ENCODE measurements at regions of chr1 and their contacts with region 1.

Region 1: DNA sequence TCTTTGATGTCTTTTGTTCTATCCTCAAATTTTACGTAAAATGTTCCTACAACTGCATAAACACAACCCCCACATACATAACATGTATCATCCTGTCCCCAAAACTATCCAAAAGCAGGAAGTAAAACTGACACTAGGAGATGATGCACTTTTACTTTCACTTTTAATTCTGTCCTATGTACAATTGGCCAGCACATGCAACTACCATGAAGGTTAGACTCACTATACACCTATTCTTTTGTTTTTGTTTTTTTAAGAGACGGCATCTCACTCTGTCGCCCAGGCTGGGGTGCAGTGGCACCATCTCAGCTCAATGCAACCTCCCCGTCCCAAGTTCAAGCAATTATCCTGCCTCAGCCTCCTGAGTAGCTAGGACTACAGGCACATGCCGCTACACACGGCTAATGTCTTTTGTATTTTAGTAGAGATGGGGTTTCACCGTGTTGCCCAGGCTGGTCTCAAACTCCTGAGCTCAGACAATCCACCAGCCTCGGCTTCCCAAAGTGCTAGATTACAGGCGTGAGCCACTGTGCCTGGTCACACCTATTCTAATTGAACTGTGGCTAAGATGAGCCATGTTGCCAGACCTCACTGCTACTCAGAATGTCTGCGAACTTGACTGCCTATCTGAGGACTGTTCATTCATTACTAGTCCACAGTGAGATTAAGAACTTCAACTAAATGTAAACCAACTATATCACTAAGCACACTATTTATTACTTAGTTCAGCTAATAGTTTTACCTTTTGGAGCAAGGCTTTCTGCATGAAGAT is 48.0 kb downstream of the TOR3A start:
- DNase-seq: no peak
- ATAC-seq: peak; percentile 59
- H3K4me3 ChIP-seq: no peak overlapping the region
- H3K27ac ChIP-seq: peak overlapping the region in 1 of 2 donors; percentile 51
- H3K4me1 ChIP-seq: peaks cover 2% of the 10 kb centered on the region in 2 donors
- H3K27me3 ChIP-seq: no peaks in the 10 kb centered on the region

Region 2: DNA sequence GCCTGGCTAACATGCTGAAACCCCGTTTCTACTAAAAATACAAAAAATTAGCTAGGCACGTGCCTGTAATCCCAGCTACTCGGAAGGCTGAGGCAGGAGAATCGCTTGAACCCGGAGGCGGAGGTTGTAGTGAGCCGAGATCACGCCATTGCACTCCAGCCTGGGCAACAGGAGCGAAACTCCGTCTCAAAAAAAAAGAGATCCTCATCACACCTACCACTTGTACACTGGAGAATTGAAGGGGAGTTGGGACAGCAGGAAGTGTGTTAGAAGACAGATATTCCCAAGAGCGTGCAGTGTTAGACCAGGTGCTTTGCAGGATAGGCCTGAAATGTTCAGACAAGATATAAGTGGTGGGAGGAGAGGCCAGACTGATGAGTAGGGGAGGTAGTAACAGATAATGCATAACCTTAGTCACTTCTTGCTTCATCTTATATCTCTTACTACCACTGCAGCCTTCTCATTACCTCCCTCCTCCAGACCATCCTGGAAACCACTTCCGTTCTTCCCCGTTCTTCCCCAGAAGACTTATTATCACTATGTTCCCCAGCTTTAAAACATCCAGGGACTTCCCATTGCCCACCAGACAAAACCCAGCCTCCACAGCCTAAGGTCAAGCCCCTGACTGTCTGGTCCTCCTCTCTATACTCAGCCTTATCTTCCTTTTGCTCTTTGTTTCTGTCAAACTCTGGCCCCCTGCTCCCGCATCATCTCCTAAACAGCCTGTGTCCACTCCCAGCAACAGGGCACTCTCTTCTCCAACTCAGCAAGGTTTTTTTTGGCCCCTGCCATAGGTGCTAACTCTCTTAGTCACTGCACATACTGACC is 82.9 kb before region 1 on chr1:
- intact Hi-C with region 1: no loop called
- DNase-seq: no peak
- ATAC-seq: no peak
- H3K4me3 ChIP-seq: no peak overlapping the region
- H3K27ac ChIP-seq: no peak overlapping the region
- H3K4me1 ChIP-seq: peaks cover 0 to 3% of the 10 kb centered on the region in 2 donors
- H3K27me3 ChIP-seq: no peaks in the 10 kb centered on the region

Region 3: GRCh38 chr1:179175011-179175841 is 45.3 kb after region 1 on chr1:
- intact Hi-C with region 1: loop called (anchors 5 kb)
- DNase-seq: no peak
- ATAC-seq: peak; percentile 63
- H3K4me3 ChIP-seq: no peak overlapping the region
- H3K27ac ChIP-seq: peak overlapping the region in 1 of 2 donors; percentile 11
- H3K4me1 ChIP-seq: peaks cover 7% of the 10 kb centered on the region in 2 donors
- H3K27me3 ChIP-seq: no peaks in the 10 kb centered on the region